Activated naive CD8-positive, alpha-beta T cell treated with anti-CD3 and anti-CD28 coated beads, Interleukin-2, amount 10 ng/mL, durations not matched to agents 7 days and 5 days (primary cell): ENCODE measurements at regions of chr20 and their contacts with region 1.

Region 1: GRCh38 chr20:34111702-34112599 is at the start of gene EIF2S2:
- DNase-seq: peak; percentile 93
- ATAC-seq: peak; percentile 92
- H3K4me3 Mint-ChIP-seq: peak within 1 kb of the TSS; percentile 93
- H3K27ac Mint-ChIP-seq: peak within 1 kb of the TSS; percentile 99
- H3K4me1 Mint-ChIP-seq: peaks cover 33% of the 10 kb centered on the region
- H3K27me3 Mint-ChIP-seq: no peaks in the 10 kb centered on the region
- total RNA-seq, gene EIF2S2: 82.4 to 85.0 TPM

Region 2: DNA sequence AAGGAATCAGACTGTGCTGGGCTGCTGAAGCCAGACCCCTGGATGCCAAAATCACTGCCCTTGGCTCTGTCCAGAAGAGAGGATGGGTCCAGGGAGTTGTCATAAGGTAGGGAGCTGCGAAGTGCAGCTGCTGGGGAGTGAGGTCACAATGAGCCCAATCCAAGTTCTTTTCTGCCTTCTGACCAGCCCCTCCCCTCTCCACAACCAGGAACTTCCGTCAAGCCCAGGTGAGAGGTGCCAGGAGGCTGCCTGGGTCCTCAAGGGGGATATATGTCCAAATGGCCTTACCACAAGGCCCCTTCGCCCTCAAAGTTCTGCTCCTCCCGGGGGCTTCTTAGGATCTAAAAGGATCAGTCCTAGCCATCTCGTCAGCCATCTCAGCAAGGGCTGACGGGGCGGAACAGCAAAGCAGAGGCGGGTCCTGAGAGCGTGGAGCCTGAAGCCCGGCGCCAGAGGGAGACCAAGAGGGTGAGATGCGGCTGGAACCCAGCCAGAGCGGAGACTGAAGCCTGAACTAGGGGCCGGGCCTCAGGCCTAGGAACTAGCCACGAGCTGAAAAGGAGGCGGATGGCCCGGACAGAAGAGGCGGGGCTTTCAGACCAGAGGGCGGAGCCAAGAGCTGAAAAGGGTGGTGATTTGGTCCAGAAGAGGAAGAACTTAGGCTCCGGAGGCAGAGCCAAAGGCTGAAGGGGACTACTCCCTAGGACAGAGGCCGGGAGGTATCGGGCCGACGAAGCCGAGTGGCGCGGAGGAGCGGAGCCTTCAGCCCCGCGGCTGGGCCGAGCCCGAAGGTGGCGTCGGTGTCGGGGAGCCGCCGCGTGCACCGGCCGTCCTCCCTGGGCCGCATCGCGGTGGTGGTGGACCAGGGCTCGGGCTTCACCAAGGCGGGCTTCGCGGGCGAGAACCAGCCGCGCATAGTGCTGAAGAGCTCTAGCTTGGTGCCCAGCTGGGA is 445.4 kb before region 1 on chr20 and contains the start of gene ACTL10:
- POLR2A ChIA-PET with region 1: interaction called, 12 read pairs
- DNase-seq: peak; percentile 84
- ATAC-seq: peak; percentile 51
- H3K4me3 Mint-ChIP-seq: peak within 1 kb of the TSS; percentile 92
- H3K27ac Mint-ChIP-seq: peak within 1 kb of the TSS; percentile 93
- H3K4me1 Mint-ChIP-seq: peaks cover 28% of the 10 kb centered on the region
- H3K27me3 Mint-ChIP-seq: no peaks in the 10 kb centered on the region
- total RNA-seq, gene ACTL10: 4.4 to 4.9 TPM

Region 3: DNA sequence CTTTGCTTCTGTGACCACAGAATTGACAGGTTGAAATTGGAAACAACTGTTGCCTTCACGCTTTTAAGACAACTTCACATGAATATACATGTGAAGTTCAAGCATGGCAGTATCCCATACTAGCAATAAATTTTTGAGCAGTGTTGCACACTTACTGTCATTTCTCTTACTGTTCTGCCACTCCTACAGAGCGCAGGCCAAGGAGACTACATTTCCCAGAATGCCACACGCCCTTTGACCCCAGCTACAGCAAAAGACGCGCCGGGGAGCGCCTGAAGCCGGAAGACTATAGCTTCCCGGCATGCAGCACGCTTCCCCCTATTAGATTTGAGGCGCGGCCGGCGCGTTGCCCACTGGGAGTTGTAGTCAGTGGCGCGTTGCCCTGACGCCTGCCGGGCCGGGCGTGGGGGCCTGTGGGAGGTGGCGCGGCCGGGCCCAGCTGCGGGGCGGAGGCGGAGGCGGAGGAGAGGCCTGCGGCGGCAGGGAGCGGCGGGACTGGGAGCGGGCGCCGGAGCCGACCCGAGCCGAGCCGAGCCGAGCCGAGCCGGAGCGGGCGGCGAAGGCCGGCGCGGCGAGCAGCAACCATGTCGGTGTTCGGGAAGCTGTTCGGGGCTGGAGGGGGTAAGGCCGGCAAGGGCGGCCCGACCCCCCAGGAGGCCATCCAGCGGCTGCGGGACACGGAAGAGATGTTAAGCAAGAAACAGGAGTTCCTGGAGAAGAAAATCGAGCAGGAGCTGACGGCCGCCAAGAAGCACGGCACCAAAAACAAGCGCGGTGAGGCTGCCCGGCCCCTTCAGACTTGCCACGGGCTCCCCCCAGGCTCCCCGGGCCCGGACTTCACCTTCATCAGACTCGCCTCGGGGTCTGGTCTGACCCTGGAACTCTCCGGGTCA is 300.8 kb before region 1 on chr20 and contains the start of gene CHMP4B:
- POLR2A ChIA-PET with region 1: interaction called, 16 read pairs
- DNase-seq: peak; percentile 97
- ATAC-seq: peak; percentile 97
- H3K4me3 Mint-ChIP-seq: peak within 1 kb of the TSS; percentile 97
- H3K27ac Mint-ChIP-seq: peak within 1 kb of the TSS; percentile 94
- H3K4me1 Mint-ChIP-seq: peaks cover 25% of the 10 kb centered on the region
- H3K27me3 Mint-ChIP-seq: peaks cover under 1% of the 10 kb centered on the region
- total RNA-seq, gene CHMP4B: 75.7 to 82.8 TPM

Region 4: DNA sequence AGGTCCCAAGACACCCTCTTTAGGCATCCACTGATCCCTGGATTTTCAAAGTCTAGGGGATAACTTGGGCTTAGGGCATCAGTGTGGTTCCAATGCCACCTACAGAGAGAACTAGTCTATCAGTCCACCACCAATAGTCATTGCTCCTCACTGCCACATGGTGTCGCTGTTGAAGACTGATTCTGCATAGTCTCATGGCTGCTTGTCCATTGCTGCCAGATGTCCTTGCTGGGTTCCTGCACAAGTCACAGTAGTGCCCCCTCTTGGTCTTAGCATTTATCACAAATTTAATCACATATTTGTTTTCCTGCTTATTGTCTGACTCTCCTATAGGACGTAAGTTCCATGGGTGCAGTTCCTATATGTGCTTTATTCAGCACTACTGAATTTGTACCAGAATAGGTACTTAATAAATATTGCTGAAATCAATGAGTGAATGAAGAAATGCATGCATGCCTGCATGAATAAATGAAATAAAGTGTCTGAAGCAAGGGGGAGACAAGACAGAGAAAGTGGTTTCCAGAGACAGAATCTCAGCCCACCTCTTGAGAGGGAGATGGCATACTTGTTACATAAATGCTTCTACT is 164.1 kb before region 1 on chr20:
- POLR2A ChIA-PET with region 1: no interaction called
- DNase-seq: no peak
- ATAC-seq: peak; percentile 63
- H3K4me3 Mint-ChIP-seq: no peak overlapping the region
- H3K27ac Mint-ChIP-seq: no peak overlapping the region
- H3K4me1 Mint-ChIP-seq: no peaks in the 10 kb centered on the region
- H3K27me3 Mint-ChIP-seq: peaks cover 5% of the 10 kb centered on the region

Region 5: GRCh38 chr20:33992923-33993575 is 118.9 kb before region 1 on chr20:
- POLR2A ChIA-PET with region 1: interaction called, 48 read pairs
- DNase-seq: peak; percentile 99
- ATAC-seq: peak; percentile 80
- H3K4me3 Mint-ChIP-seq: peak overlapping the region; percentile 99
- H3K27ac Mint-ChIP-seq: peak overlapping the region; percentile 99
- H3K4me1 Mint-ChIP-seq: peaks cover 38% of the 10 kb centered on the region
- H3K27me3 Mint-ChIP-seq: no peaks in the 10 kb centered on the region

Region 6: DNA sequence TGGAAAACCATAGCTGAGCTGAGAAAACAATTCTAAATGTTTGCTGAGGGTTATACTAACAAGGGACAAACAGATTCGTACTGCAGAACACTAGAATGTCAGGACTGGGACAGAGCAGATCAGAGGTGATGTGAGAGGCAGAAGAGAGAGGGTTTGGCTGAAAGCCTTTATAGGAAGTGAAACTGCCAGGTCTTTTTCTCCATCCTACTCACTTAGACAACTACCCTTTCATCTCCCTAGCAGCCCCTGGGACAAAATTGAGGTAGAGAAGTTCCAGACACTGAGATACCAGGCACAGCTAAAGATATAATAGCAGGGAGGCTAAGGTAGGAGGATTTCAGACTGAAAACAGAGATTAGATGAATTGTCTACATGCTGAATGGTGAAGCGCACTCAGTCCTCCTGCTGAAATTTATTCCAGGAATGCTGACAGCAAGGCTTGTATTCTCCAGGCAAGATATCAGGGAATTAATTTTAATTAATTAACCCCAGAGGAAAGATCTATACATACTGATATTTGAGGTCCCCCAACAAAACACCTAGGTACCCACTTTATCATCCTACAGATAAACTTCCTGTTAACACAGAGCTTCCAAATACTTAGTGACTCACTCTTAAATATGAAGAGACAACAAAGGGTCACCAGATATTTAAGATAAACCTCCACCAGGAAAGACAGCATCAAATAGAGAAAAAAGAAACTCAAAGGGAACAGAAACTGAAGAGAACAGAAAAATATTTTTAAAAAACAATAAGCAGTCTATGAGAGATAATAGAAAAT is 12.7 kb after region 1 on chr20:
- POLR2A ChIA-PET with region 1: interaction called, 12 read pairs
- DNase-seq: no peak
- ATAC-seq: no peak
- H3K4me3 Mint-ChIP-seq: no peak overlapping the region
- H3K27ac Mint-ChIP-seq: no peak overlapping the region
- H3K4me1 Mint-ChIP-seq: peaks cover 19% of the 10 kb centered on the region
- H3K27me3 Mint-ChIP-seq: peaks cover 26% of the 10 kb centered on the region